AG04450 (cell line): ENCODE measurements at regions of chr2 and their contacts with region 1.

Region 1: GRCh38 chr2:101205521-101205998 is 47.1 kb upstream of the CNOT11 start:
- DNase-seq: peak; percentile 63
- H3K4me3 ChIP-seq: peak overlapping the region; percentile 7; the same call in 1 of the 2 replicates
- H3K27ac ChIP-seq: no peak overlapping the region
- H3K27me3 ChIP-seq: no peaks in the 10 kb centered on the region
- CTCF ChIP-seq: peak; percentile 73

Region 2: DNA sequence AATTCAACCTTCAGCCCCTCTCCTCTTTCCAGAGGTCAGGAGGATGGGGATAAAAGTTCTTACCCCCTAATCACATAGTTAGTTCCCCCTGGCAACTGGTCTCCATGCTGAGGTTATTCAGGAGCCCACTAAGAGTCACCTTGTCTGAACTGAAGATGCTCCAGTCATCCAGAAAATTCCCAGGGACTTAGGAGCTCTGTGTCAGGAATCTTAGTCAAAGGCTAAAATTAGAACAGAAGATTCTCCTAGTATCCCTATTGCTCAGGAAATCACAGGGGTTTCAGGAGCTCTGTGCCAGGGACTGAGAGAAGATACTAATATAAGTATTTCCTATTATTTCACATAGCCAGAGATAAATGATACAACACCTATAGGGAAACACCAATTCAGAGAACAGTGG is 846.0 kb before region 1 on chr2:
- CTCF ChIA-PET with region 1: no interaction called
- POLR2A ChIA-PET with region 1: no interaction called
- DNase-seq: no peak
- H3K4me3 ChIP-seq: no peak overlapping the region
- H3K27ac ChIP-seq: no peak overlapping the region
- H3K27me3 ChIP-seq: peaks cover 16% of the 10 kb centered on the region
- CTCF ChIP-seq: no peak

Region 3: GRCh38 chr2:100730346-100730745 is 475.2 kb before region 1 on chr2:
- CTCF ChIA-PET with region 1: interaction called, 10 read pairs
- POLR2A ChIA-PET with region 1: no interaction called
- DNase-seq: peak; percentile 34
- H3K4me3 ChIP-seq: no peak overlapping the region
- H3K27ac ChIP-seq: no peak overlapping the region
- H3K27me3 ChIP-seq: peaks cover 6% of the 10 kb centered on the region
- CTCF ChIP-seq: peak; percentile 90

Region 4: GRCh38 chr2:100957996-100958653 is 247.4 kb before region 1 on chr2:
- CTCF ChIA-PET with region 1: no interaction called
- POLR2A ChIA-PET with region 1: no interaction called
- DNase-seq: peak; percentile 55
- H3K4me3 ChIP-seq: no peak overlapping the region
- H3K27ac ChIP-seq: peak overlapping the region; percentile 52
- H3K27me3 ChIP-seq: no peaks in the 10 kb centered on the region
- CTCF ChIP-seq: no peak

Region 5: DNA sequence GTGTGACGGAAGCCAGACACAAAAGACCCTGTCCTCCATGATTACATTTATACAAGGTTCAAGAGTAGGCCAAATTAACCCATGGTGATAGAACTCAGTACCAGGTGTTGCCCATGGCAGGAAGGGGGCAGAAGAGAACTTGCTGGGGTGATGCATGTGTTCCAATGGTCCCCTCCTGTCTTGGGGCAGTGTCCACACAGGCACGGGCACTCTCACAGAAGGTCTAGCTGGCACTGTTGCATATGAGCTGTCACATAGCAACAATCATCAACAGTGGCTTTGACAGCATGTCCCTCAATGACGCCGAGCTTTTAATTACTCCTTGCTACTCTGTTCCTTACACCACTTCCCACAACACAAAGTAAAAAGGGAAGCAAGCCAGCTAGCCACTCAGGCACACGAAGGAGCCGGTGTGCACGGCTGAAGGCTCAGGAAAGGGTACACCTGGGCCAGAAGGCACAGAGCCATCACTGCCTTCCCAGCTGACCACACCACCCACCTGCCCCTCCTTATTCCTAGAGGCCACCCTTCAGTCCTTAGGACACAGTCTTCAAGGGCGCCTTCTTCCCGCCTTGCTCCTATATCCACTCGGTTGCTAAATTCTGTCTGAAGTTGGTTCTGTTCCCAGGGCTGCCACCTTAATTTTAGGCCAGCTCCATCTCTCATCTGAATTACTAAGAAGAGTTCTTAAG is 174.6 kb before region 1 on chr2:
- CTCF ChIA-PET with region 1: interaction called, 171 read pairs
- POLR2A ChIA-PET with region 1: no interaction called
- DNase-seq: no peak
- H3K4me3 ChIP-seq: no peak overlapping the region
- H3K27ac ChIP-seq: no peak overlapping the region
- H3K27me3 ChIP-seq: no peaks in the 10 kb centered on the region
- CTCF ChIP-seq: no peak

Region 6: GRCh38 chr2:101151141-101151858 is 54.3 kb before region 1 on chr2 and contains the start of gene TBC1D8:
- CTCF ChIA-PET with region 1: interaction called, 13 read pairs
- POLR2A ChIA-PET with region 1: no interaction called
- DNase-seq: peak; percentile 26
- H3K4me3 ChIP-seq: peak within 1 kb of the TSS; percentile 71
- H3K27ac ChIP-seq: peak within 1 kb of the TSS; percentile 11
- H3K27me3 ChIP-seq: peaks cover 26% of the 10 kb centered on the region
- CTCF ChIP-seq: no peak
- polyA plus RNA-seq, gene TBC1D8: 2.3 and 2.5 TPM in 2 replicates

Region 7: GRCh38 chr2:101219246-101219645 is 13.7 kb after region 1 on chr2:
- CTCF ChIA-PET with region 1: interaction called, 16 read pairs
- POLR2A ChIA-PET with region 1: interaction called, 3 read pairs
- DNase-seq: no peak
- H3K4me3 ChIP-seq: no peak overlapping the region
- H3K27ac ChIP-seq: no peak overlapping the region
- H3K27me3 ChIP-seq: peaks cover 5% of the 10 kb centered on the region
- CTCF ChIP-seq: no peak

Region 8: DNA sequence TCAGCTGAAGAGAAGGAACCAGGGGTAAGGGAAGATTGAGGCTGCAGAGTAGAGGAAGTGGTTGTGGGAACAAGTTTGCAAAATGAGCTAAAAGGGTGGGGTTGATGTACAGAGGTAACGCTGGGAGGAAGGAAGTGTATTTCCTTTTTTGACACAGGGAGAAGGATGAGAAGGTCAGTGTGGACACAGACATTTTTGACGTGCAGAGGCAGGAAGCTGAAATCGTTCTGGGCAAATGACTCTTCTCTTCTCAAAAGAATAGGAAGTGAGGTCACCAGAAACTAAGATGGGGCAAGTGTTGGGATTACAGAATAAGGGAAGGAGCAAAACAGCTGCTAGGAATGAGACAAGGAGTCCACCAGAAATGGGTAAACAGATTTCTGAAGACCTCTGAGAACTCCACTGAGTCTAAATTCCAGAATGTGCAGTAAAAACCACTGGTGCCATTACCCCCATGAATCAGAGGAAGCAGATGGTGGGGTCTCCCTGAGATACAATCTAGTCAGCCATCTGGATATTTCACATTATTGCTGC is 123.0 kb after region 1 on chr2:
- CTCF ChIA-PET with region 1: no interaction called
- POLR2A ChIA-PET with region 1: no interaction called
- DNase-seq: peak; percentile 42
- H3K4me3 ChIP-seq: no peak overlapping the region
- H3K27ac ChIP-seq: peak overlapping the region; percentile 49
- H3K27me3 ChIP-seq: no peaks in the 10 kb centered on the region
- CTCF ChIP-seq: no peak